Activated naive CD4-positive, alpha-beta T cell treated with anti-CD3 and anti-CD28 coated beads for 36 hours (primary cell): ENCODE measurements at regions of chrX and their contacts with region 1.

Region 1: GRCh38 chrX:7170903-7171302 is 22.9 kb upstream of the PUDP start:
- DNase-seq: peak; percentile 50
- H3K4me3 Mint-ChIP-seq: no peak overlapping the region
- H3K27ac Mint-ChIP-seq: no peak overlapping the region
- H3K4me1 Mint-ChIP-seq: no peaks in the 10 kb centered on the region
- H3K27me3 Mint-ChIP-seq: no peaks in the 10 kb centered on the region

Region 2: GRCh38 chrX:7068939-7069371 is 101.9 kb before region 1 on chrX:
- CTCF ChIA-PET with region 1: no interaction called
- intact Hi-C with region 1: loop called (anchors 5 kb)
- DNase-seq: peak; percentile 57
- H3K4me3 Mint-ChIP-seq: no peak overlapping the region
- H3K27ac Mint-ChIP-seq: no peak overlapping the region
- H3K4me1 Mint-ChIP-seq: peaks cover 25% of the 10 kb centered on the region
- H3K27me3 Mint-ChIP-seq: no peaks in the 10 kb centered on the region

Region 3: GRCh38 chrX:7132335-7133049 is 38.4 kb before region 1 on chrX:
- CTCF ChIA-PET with region 1: no interaction called
- intact Hi-C with region 1: loop called (anchors 1 kb)
- DNase-seq: peak; percentile 23
- H3K4me3 Mint-ChIP-seq: no peak overlapping the region
- H3K27ac Mint-ChIP-seq: no peak overlapping the region
- H3K4me1 Mint-ChIP-seq: peaks cover 23% of the 10 kb centered on the region
- H3K27me3 Mint-ChIP-seq: no peaks in the 10 kb centered on the region